ENCODE measurements at regions of chr13 and their contacts with region 1.

Region 1: DNA sequence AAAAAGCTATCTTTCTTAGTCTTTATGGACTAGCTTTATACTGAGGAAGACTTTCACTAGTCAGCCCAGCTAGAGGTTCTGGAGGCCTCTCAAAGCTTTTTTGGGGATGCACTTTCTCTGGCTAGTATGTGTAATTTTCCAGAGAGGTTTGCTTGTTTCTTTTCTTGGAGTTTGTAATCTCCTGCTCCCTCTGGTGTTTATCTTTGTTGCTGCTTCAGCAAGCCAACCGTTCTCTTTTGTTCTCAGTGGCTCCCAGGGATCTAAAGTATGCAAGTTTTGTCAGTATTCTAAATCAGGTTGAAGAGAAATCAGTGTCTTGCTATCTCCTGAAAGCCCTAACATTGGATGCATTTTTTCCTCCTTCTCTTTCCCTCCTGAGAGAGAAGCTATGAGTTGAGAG is 121.1 kb upstream of the MYO16 start:
- DNase-seq: no peak
- ATAC-seq: no peak
- H3K4me3 ChIP-seq: no peak overlapping the region
- H3K27ac ChIP-seq: no peak overlapping the region
- H3K4me1 ChIP-seq: no peaks in the 10 kb centered on the region
- H3K27me3 ChIP-seq: no peaks in the 10 kb centered on the region
- CTCF ChIP-seq: no peak
- POLR2A ChIP-seq: no peak

Region 2: GRCh38 chr13:108322206-108322824 is 185.9 kb before region 1 on chr13:
- in situ Hi-C with region 1: loop called in 1 of 4 experiments (anchors 10 kb)
- intact Hi-C with region 1: no loop called
- DNase-seq: no peak
- ATAC-seq: peak; percentile 33 to 41
- H3K4me3 ChIP-seq: no peak overlapping the region
- H3K27ac ChIP-seq: no peak overlapping the region
- H3K4me1 ChIP-seq: no peaks in the 10 kb centered on the region
- H3K27me3 ChIP-seq: no peaks in the 10 kb centered on the region
- CTCF ChIP-seq: peak; percentile 18 to 64 (median 27)
- POLR2A ChIP-seq: no peak

Measured in gastrocnemius medialis (tissue), 4 donors.